ENCODE measurements at regions of chr17 and their contacts with region 1.

Region 1: DNA sequence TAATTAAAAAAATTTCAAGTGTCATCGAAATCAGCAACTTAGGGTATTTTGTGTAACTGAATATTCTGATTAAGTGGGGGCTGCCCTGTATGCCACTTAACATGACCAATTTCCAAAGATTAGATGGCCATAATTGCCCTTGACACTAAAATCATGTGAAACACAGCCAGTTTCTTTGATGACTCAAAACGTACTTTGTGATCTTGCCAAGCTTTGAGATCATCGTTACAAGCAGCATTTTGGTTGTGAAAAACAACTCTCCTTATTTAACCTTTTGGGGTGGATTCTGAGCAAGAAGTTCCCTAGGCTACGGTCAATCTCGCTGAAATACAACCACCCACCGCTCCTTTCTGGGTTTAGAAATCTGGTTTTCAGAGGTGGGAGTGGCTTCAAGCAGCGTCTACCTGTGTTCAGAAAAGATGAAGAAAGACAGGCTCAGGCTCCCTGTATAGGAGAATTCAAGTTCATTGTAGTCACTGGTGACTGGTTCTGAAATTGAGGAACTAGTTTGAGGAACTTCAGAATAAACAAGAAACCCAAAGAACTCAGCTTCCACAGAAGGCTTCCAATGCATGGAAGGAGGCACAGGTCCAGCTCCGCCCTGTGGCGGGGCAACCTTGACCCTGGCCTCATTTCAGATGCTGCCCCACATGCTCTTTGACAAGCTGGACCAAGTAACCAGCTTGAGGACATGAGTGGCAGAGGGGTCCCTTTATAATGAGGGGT is 9.4 kb downstream of the MAP3K14 start:
- DNase-seq: peak; percentile 81
- ATAC-seq: peak; percentile 68
- H3K4me3 ChIP-seq: peak overlapping the region in 2 of 5 experiments; percentile 21 to 25
- H3K4me3 Mint-ChIP-seq: peak overlapping the region; percentile 85
- H3K27ac ChIP-seq: peak overlapping the region; percentile 81 to 90
- H3K27ac Mint-ChIP-seq: peak overlapping the region; percentile 98
- H3K4me1 ChIP-seq: peaks cover 90 to 95% of the 10 kb centered on the region in 2 donors
- H3K4me1 Mint-ChIP-seq: peaks cover 82% of the 10 kb centered on the region
- H3K27me3 ChIP-seq: no peaks in the 10 kb centered on the region
- H3K27me3 Mint-ChIP-seq: no peaks in the 10 kb centered on the region
- CTCF ChIP-seq: no peak

Region 2: GRCh38 chr17:44689477-44690217 is 617.8 kb before region 1 on chr17 and contains the start of gene CCDC43:
- CTCF ChIA-PET with region 1: no interaction called
- POLR2A ChIA-PET with region 1: interaction called, 10 read pairs
- intact Hi-C with region 1: no loop called
- DNase-seq: peak; percentile 95
- ATAC-seq: peak; percentile 100
- H3K4me3 ChIP-seq: peak within 1 kb of the TSS; percentile 87 to 98 (median 94)
- H3K4me3 Mint-ChIP-seq: peak within 1 kb of the TSS; percentile 99
- H3K27ac ChIP-seq: peak within 1 kb of the TSS; percentile 83 to 92
- H3K27ac Mint-ChIP-seq: peak within 1 kb of the TSS; percentile 94
- H3K4me1 ChIP-seq: peaks cover 12 to 18% of the 10 kb centered on the region in 2 donors
- H3K4me1 Mint-ChIP-seq: peaks cover 23% of the 10 kb centered on the region
- H3K27me3 ChIP-seq: no peaks in the 10 kb centered on the region
- H3K27me3 Mint-ChIP-seq: no peaks in the 10 kb centered on the region
- CTCF ChIP-seq: no peak
- total RNA-seq, gene CCDC43: 21.9 and 22.7 TPM in 2 replicates

Region 3: GRCh38 chr17:45284176-45285140 is 23.0 kb before region 1 on chr17:
- CTCF ChIA-PET with region 1: interaction called, 207 read pairs
- POLR2A ChIA-PET with region 1: interaction called, 4 read pairs
- intact Hi-C with region 1: no loop called
- DNase-seq: peak; percentile 50
- ATAC-seq: peak; percentile 65
- H3K4me3 ChIP-seq: no peak overlapping the region
- H3K4me3 Mint-ChIP-seq: no peak overlapping the region
- H3K27ac ChIP-seq: peak overlapping the region in 1 of 2 donors; percentile 35
- H3K27ac Mint-ChIP-seq: peak overlapping the region; percentile 61
- H3K4me1 ChIP-seq: peaks cover 0 to 8% of the 10 kb centered on the region in 2 donors
- H3K4me1 Mint-ChIP-seq: peaks cover 4% of the 10 kb centered on the region
- H3K27me3 ChIP-seq: no peaks in the 10 kb centered on the region
- H3K27me3 Mint-ChIP-seq: no peaks in the 10 kb centered on the region
- CTCF ChIP-seq: peak; percentile 33

Region 4: DNA sequence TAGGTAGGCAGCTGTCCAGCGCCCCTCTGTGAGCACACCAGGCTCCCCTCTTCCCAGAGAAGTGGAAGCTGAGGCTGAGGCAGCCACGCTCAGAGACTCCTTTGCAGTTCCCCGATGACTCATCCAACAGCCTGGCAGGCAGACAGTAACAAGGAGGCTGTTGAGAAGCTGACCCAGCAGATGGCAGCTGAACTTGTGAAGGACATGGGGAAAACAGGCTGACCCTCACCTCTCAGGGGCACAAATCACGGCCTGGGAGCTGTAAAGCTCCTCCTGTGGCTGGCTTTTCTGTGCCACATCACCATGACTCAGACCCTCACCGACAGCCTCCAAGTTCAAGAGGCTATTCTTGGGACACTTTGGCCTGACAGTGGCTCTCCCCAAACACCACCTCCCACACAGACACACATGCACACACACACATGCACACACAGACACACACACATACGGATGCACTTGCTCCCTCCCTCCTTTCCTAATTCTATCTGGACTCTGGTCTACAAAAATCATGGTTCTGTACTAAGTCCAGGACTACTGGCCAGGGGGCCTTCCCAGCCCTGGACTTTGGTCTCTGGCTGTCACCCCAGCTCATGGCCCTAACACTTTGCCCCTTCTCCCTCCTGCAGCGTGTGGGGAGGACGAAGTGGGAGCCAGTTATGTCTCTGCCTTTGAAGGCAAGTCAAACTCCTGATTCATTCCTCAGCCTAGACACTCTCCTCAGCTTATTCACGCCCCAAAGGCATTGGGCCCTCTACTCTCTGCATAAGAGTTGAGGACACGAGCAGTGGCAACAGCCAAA is 13.8 kb before region 1 on chr17:
- CTCF ChIA-PET with region 1: interaction called, 38 read pairs
- POLR2A ChIA-PET with region 1: interaction called, 14 read pairs
- intact Hi-C with region 1: loop called (anchors 1 kb)
- DNase-seq: no peak
- ATAC-seq: no peak
- H3K4me3 ChIP-seq: no peak overlapping the region
- H3K4me3 Mint-ChIP-seq: peak overlapping the region; percentile 56
- H3K27ac ChIP-seq: no peak overlapping the region
- H3K27ac Mint-ChIP-seq: peak overlapping the region; percentile 86
- H3K4me1 ChIP-seq: peaks cover 75 to 84% of the 10 kb centered on the region in 2 donors
- H3K4me1 Mint-ChIP-seq: peaks cover 78% of the 10 kb centered on the region
- H3K27me3 ChIP-seq: no peaks in the 10 kb centered on the region
- H3K27me3 Mint-ChIP-seq: no peaks in the 10 kb centered on the region
- CTCF ChIP-seq: no peak

Region 5: GRCh38 chr17:45385331-45385997 is 78.0 kb after region 1 on chr17:
- CTCF ChIA-PET with region 1: interaction called, 39 read pairs
- POLR2A ChIA-PET with region 1: no interaction called
- intact Hi-C with region 1: no loop called
- DNase-seq: peak; percentile 89
- ATAC-seq: peak; percentile 96
- H3K4me3 ChIP-seq: no peak overlapping the region
- H3K4me3 Mint-ChIP-seq: no peak overlapping the region
- H3K27ac ChIP-seq: no peak overlapping the region
- H3K27ac Mint-ChIP-seq: peak overlapping the region; percentile 16
- H3K4me1 ChIP-seq: peaks cover 5 to 12% of the 10 kb centered on the region in 2 donors
- H3K4me1 Mint-ChIP-seq: peaks cover 17% of the 10 kb centered on the region
- H3K27me3 ChIP-seq: peaks cover 0 to 12% (median 2%) of the 10 kb centered on the region in 4 experiments
- H3K27me3 Mint-ChIP-seq: peaks cover 16% of the 10 kb centered on the region
- CTCF ChIP-seq: peak; percentile 98

Region 6: GRCh38 chr17:45584092-45585036 is 276.9 kb after region 1 on chr17:
- CTCF ChIA-PET with region 1: no interaction called
- POLR2A ChIA-PET with region 1: interaction called, 11 read pairs
- intact Hi-C with region 1: no loop called
- DNase-seq: peak; percentile 85
- ATAC-seq: peak; percentile 70
- H3K4me3 ChIP-seq: peak overlapping the region; percentile 71 to 90 (median 83)
- H3K4me3 Mint-ChIP-seq: peak overlapping the region; percentile 99
- H3K27ac ChIP-seq: peak overlapping the region; percentile 90 to 92
- H3K27ac Mint-ChIP-seq: peak overlapping the region; percentile 100
- H3K4me1 ChIP-seq: peaks cover 15 to 19% of the 10 kb centered on the region in 2 donors
- H3K4me1 Mint-ChIP-seq: peaks cover 46% of the 10 kb centered on the region
- H3K27me3 ChIP-seq: no peaks in the 10 kb centered on the region
- H3K27me3 Mint-ChIP-seq: no peaks in the 10 kb centered on the region
- CTCF ChIP-seq: no peak

Measured in B cell (primary cell).